ENCODE measurements at regions of chr12 and their contacts with region 1.

Region 1: DNA sequence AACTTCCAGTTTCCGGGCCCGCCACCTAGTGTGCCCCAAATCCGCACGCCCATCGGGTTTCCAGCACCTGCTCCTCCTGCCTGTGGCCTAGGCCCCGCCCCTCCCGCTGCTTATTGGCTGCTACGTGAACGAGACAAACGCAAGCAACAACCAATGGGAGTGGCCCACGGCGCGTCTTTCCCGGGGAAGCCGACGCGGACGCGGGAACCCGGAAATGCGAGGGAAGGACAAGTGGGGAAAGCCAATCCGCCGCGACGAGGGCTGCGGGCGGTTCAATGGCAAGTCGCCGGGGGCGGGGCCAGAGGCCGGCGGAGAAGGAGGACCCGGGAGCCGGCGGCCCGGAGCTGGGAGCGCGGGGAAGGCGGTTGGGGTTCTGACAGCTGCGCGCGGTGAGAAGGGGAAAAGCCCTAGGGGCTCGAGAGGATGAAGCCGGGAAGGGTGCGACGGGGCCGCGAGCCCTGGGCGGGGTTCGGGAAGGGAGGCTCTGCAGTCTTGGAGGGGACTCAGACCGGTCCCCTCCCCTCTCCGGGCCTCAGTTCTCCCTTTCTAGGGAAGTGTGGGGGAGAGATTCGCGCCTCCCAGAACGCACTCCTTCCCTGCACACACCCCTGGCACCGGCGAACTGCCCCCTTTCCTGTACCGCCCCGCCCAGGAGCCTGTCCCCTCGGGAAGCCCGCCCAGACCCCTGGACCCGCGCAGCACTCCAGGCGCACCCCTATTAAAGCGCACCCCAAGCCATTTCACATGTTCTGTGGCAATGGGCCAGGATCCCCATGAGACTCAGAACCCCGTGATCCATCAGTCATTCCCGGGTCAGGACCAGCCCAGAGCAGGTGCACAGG is at the start of gene FICD:
- DNase-seq: peak; percentile 100
- ATAC-seq: peak; percentile 97
- total RNA-seq, gene FICD: 2.9 TPM

Region 2: DNA sequence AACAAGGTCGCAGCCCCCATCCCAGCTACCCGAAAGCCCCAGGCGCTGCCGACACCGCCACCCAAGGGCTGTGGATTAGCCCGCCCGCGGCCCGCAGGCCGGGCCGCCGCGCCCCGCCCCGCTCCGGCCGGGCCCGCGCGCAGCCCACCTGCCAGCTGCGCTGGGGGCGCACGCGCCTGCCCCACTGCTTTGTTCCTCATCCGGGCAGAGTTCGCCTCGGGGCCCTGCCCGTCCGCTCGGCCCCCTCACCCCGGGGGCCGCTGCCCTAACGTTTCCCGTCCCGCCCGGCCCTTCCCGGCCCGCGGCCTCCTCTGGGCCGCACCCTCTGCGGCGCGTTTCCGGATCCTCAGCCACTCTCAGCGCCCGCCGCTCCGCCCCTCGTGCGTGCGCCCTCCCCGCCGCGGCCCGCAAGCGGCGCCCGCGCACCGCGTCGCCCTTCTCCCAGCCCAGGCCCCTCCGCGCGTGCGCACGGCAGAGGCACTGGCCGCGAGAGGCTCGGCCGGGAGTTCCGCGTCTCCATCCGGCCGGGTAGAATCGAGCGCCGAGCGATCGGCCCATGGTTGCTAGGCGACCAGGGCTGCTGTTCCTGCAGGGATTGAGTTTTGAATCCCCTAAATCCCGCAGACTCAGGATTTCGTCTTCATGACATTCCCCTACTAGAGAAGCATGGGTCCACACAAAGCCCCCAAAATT is 754.2 kb before region 1 on chr12 and contains the start of gene PRDM4:
- intact Hi-C with region 1: loop called (anchors 10 kb)
- DNase-seq: peak; percentile 97
- ATAC-seq: peak; percentile 99
- total RNA-seq, gene PRDM4: 12.5 TPM

Region 3: GRCh38 chr12:107992870-107993451 is 522.2 kb before region 1 on chr12:
- intact Hi-C with region 1: loop called (anchors 5 kb)
- DNase-seq: no peak
- ATAC-seq: no peak

Region 4: DNA sequence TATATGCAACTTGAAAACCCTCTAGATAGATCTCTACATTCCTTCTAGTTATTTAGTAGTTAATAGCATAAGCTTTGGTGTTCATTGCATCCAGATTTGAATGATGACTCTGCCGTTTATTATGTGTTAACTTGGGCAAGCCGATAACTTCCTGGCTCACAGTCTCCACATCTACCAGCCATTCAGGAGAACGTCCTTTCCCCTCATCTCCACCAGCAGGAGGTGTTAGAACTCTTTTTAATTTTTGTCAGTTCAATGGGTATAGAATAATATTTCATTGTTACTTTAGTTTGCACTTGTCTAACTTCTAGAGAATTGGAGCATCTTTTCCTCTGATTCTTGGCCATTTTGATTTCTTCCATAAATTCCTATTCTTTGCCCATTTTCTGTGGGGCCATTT is 416.1 kb before region 1 on chr12:
- intact Hi-C with region 1: loop called (anchors 2 kb)
- DNase-seq: no peak
- ATAC-seq: no peak

Region 5: DNA sequence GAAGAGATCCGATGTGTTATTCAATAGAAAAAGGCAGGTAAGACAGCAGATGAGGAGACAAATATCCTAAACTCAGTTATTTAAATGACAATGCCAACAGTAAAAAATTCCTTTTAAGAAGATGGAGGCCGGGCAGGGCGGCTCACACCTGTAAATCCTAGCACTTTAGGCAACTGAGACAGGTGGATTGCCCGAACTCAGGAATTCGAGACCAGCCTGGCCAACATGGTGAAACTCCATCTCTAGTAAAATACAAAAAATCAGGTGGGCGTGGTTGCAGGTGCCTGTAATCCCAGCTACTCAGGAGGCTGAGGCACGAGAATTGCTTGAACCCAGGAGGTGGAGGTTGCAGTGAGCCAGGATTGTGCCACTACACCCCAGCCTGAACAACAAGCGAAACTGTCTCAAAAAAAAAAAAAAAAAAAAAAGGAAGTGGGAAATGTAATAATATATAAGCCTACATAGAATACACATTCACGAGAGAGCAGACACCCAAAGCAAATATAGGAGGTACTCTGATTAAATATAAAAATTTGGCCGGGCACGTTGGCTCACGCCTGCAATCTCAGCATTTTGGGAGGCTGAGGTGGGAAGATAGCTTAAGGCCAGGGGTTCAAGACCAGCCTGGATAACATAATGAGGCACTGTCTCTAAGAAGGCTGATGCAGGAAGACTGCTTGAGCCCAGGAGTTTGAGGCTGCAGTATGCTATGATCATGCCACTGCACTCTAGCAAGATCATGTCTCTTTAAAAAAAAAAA is 197.2 kb after region 1 on chr12:
- intact Hi-C with region 1: no loop called
- DNase-seq: no peak
- ATAC-seq: no peak

Measured in Right ventricle myocardium inferior (tissue), 1 donor.